Left ventricle myocardium superior (tissue), 1 donor: ENCODE measurements at regions of chr5 and their contacts with region 1.

Region 1: DNA sequence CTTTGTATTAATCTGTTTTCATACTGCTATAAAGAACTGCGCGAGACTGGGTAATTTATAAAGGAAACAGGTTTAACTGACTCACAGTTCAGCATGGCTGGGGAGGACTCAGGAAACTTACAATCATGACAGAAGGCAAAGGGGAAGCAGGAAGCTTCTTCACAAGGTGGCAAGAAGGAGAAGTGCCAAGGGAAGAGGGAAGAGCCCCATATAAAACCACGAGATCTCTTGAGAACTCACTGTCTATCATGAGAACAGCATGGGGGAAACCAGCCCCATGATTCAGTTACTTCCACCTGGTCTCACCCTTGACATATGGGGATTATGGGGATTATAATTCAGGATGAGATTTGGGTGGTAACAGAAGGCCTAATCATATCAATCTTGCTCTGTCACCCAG is 60.9 kb upstream of the CHD1 start:
- DNase-seq: no peak
- ATAC-seq: no peak

Region 2: DNA sequence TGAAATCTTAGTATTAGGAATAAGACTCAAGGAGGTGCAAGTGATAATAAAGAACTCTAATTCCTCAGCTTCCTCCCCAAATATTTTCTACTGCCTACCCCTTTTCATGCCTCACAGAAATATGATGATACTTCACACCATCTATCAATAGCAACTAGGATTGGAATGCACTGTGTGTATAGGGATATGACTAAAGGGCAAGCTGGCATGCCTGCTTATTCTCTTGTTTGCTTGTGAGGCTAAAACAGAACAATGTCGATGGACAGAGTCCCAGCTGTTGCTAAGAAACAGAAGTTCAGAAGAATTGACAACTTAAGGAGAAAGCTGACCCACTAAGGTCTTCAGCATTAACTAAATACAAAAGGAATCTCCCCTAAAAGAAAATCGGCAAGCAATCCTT is 51.3 kb before region 1 on chr5:
- intact Hi-C with region 1: loop called (anchors 2 kb)
- DNase-seq: no peak
- ATAC-seq: peak; percentile 85